ENCODE measurements at regions of chr1 and their contacts with region 1.

Region 1: DNA sequence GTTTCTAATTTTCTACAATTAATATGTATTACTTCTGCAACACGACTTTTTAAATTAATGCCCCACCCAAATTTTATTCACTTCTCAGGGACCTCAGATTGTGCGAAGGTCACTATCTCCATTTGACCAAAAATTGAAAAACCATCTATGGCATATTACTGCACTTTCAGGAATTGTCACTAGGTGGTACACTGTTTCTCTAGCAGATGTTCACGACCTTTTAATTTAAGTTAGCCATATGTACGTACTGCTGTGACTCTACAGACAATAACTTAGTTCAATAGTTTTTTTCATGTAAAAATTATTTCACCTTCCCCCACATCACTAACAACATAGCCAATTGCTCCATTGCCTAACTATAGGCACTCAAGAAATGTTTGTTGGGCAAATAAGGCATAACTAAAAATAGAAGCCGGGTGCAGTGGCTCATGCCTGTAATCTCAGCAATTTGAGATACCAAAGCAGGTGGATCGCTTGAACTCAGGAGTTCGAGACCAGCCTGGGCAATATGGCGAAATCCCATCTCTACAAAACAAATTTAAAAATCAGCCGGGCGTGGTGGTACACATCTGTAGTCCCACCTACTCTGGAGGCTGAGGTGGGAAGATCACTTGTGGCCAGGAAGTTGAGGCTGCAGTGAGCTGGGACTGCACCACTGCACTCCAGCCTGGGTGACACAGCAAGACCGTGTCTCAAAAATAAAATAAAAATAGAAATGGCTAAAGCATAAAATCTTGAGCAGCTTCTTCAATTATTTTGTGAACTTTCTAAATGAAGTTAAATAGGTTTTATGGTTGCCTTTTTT is 75.7 kb upstream of the PKN2 start:
- DNase-seq: no peak
- H3K4me3 ChIP-seq: no peak overlapping the region
- H3K27ac ChIP-seq: no peak overlapping the region
- H3K4me1 ChIP-seq: peaks cover 0 to 14% (median 8%) of the 10 kb centered on the region in 4 donors
- H3K27me3 ChIP-seq: no peaks in the 10 kb centered on the region
- CTCF ChIP-seq: peak; percentile 39 to 56 (median 53)
- EP300 ChIP-seq: no peak
- POLR2A ChIP-seq: no peak

Region 2: DNA sequence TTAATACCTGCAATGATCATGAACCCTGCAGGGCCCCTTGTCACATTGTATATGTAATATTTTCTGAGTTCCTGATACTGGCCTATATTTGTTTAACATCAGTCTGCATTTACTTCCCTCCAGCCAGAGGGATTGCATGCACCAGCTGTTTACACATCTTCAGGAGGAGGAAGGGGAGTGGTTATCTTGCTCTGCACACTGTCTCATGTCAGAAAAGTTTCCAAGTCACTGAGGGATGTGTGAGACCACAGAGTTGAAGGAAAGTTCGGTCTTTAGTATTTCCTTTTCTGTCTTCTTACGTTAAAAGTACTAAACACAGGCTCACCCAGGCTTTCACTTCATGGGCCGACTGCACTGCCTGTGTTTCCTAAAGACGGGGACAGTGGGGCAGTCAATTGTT is 705.5 kb before region 1 on chr1:
- in situ Hi-C with region 1: no loop called
- intact Hi-C with region 1: loop called (anchors 5 kb)
- DNase-seq: no peak
- H3K4me3 ChIP-seq: no peak overlapping the region
- H3K27ac ChIP-seq: peak overlapping the region in 3 of 4 donors; percentile 5 to 58 (median 26)
- H3K4me1 ChIP-seq: peaks cover 0 to 32% (median 16%) of the 10 kb centered on the region in 4 donors
- H3K27me3 ChIP-seq: no peaks in the 10 kb centered on the region
- CTCF ChIP-seq: no peak
- EP300 ChIP-seq: no peak
- POLR2A ChIP-seq: no peak

Region 3: DNA sequence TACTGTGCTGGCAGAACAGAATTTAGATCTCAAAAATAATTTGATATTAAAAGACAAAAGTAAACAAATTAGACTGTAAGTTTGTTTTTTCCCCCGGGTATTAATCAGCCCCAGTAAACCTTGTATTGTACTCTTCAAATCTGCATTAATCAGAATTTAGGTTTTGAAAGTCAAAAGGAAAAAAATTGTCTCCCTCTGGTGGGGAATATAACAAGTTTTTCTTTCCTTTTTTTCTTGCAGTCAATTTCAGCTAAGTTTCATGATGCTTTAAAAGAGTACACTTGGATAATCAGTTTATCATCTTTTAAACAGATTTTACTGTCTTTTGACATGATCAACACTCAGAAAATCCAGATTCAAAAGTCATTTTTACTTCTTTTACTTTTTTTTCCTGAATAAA is 58.8 kb before region 1 on chr1:
- in situ Hi-C with region 1: no loop called
- intact Hi-C with region 1: no loop called
- DNase-seq: no peak
- H3K4me3 ChIP-seq: no peak overlapping the region
- H3K27ac ChIP-seq: no peak overlapping the region
- H3K4me1 ChIP-seq: no peaks in the 10 kb centered on the region
- H3K27me3 ChIP-seq: no peaks in the 10 kb centered on the region
- CTCF ChIP-seq: peak in 3 of 5 experiments; percentile 9 to 18 (median 13)
- EP300 ChIP-seq: no peak
- POLR2A ChIP-seq: no peak